Endothelial cell of umbilical vein (primary cell): ENCODE measurements at regions of chr2 and their contacts with region 1.

Region 1: GRCh38 chr2:187138265-187138664 is 289.3 kb upstream of the ZSWIM2 start:
- DNase-seq: peak; percentile 81
- H3K4me3 ChIP-seq: no peak overlapping the region
- H3K27ac ChIP-seq: peak overlapping the region; percentile 1
- H3K4me1 ChIP-seq: peaks cover 30% of the 10 kb centered on the region
- H3K27me3 ChIP-seq: no peaks in the 10 kb centered on the region
- CTCF ChIP-seq: peak; percentile 70 to 80
- POLR2A ChIP-seq: no peak

Region 2: DNA sequence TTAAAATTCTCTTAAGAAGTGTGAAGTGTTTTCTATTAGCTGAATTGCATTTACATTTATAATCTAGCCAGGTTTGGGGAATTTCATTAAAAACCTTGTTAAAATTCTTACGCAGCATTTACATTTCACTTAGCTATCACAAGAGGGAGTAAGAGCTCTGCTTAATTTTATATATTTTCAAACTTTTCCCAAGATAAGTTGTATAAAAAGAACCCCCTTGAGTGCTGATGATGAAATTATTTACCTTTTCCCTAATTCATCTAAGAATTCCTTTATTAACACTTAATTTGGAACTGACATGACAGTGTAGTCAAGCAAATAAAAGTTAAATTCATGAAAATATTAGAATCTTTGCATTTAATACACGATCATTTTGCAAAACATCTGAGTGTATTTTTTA is 235.0 kb before region 1 on chr2:
- CTCF ChIA-PET with region 1: interaction called, 15 read pairs
- POLR2A ChIA-PET with region 1: interaction called, 5 read pairs
- dilution Hi-C with region 1: no loop called
- intact Hi-C with region 1: loop called (anchors 5 kb)
- DNase-seq: peak; percentile 56
- H3K4me3 ChIP-seq: no peak overlapping the region
- H3K27ac ChIP-seq: no peak overlapping the region
- H3K4me1 ChIP-seq: peaks cover 2% of the 10 kb centered on the region
- H3K27me3 ChIP-seq: no peaks in the 10 kb centered on the region
- CTCF ChIP-seq: peak in 1 of 2 donors; percentile 38
- POLR2A ChIP-seq: no peak

Region 3: GRCh38 chr2:187206071-187206470 is 67.8 kb after region 1 on chr2:
- CTCF ChIA-PET with region 1: interaction called, 3 read pairs
- POLR2A ChIA-PET with region 1: no interaction called
- dilution Hi-C with region 1: no loop called
- intact Hi-C with region 1: loop called (anchors 1 kb)
- DNase-seq: peak; percentile 89
- H3K4me3 ChIP-seq: no peak overlapping the region
- H3K27ac ChIP-seq: peak overlapping the region; percentile 39
- H3K4me1 ChIP-seq: peaks cover 13% of the 10 kb centered on the region
- H3K27me3 ChIP-seq: no peaks in the 10 kb centered on the region
- CTCF ChIP-seq: no peak
- POLR2A ChIP-seq: no peak

Region 4: DNA sequence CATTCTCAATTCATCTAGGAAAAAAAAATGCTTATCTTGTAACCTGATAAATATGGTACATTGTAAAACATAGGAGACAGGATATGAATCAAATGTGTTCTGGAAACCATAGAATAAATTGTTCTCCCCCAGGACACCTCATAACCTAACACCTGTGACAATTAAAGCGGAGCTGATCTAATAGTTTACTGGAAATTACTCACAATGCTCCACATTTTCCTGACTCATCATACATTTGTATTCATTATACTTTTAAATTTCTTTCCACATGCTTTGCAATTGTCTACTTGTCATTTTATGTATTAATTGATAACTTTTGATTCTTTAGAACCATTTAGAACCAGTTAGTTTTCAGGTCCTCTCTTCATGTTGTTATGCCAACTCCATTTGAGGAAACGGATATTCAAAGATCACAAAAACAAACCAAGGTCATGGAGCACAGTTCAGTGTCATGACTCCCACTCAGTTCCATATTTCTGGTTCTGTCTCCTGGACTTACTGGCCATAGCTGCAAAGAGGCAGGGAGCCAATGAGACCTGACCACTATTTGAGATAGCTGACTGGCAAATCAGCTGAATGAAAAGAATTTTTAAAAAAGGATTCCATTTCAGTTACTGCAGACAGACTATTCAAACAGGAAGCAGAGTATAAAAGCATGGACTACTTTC is 181.3 kb after region 1 on chr2:
- CTCF ChIA-PET with region 1: interaction called, 9 read pairs
- POLR2A ChIA-PET with region 1: no interaction called
- dilution Hi-C with region 1: no loop called
- intact Hi-C with region 1: loop called (anchors 1 kb)
- DNase-seq: peak; percentile 96
- H3K4me3 ChIP-seq: peak overlapping the region in 1 of 3 experiments; percentile 3
- H3K27ac ChIP-seq: peak overlapping the region; percentile 94
- H3K4me1 ChIP-seq: peaks cover 47% of the 10 kb centered on the region
- H3K27me3 ChIP-seq: no peaks in the 10 kb centered on the region
- CTCF ChIP-seq: no peak
- POLR2A ChIP-seq: no peak

Region 5: GRCh38 chr2:187383043-187383800 is 245.0 kb after region 1 on chr2:
- CTCF ChIA-PET with region 1: interaction called, 8 read pairs
- POLR2A ChIA-PET with region 1: no interaction called
- dilution Hi-C with region 1: no loop called
- intact Hi-C with region 1: loop called (anchors 5 kb)
- DNase-seq: peak; percentile 55
- H3K4me3 ChIP-seq: no peak overlapping the region
- H3K27ac ChIP-seq: no peak overlapping the region
- H3K4me1 ChIP-seq: peaks cover 10% of the 10 kb centered on the region
- H3K27me3 ChIP-seq: no peaks in the 10 kb centered on the region
- CTCF ChIP-seq: no peak
- POLR2A ChIP-seq: no peak

Region 6: DNA sequence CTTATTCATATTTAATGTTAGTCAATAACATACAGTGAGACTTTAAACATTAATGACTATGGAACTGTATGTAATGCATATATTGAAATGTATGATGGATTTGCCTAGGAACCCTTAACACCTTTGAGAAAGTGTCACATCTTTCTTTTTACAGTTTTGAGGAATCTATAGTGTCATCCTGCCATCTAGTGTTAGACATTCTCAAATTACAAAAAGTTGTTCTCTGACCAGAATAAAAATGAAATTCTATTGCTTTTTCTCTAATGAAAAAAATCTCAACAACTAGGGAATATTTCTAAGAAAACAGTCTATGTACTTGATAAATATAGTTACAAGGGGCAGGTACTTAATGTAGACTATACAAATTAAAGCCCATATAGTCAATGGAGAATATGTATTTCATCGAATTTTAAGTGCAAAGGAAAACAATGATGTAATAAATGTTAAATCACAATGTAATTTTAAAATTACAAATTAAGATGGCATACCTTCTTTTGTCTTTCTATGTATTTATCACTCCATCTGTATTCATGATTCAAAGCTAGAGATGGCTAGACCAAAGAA is 314.9 kb after region 1 on chr2:
- CTCF ChIA-PET with region 1: interaction called, 24 read pairs
- POLR2A ChIA-PET with region 1: interaction called, 11 read pairs
- dilution Hi-C with region 1: no loop called
- intact Hi-C with region 1: loop called (anchors 1 kb)
- DNase-seq: peak; percentile 68
- H3K4me3 ChIP-seq: no peak overlapping the region
- H3K27ac ChIP-seq: no peak overlapping the region
- H3K4me1 ChIP-seq: peaks cover 6% of the 10 kb centered on the region
- H3K27me3 ChIP-seq: no peaks in the 10 kb centered on the region
- CTCF ChIP-seq: peak; percentile 10 to 12
- POLR2A ChIP-seq: no peak